CD4-positive, alpha-beta T cell (primary cell): ENCODE measurements at regions of chr11 and their contacts with region 1.

Region 1: DNA sequence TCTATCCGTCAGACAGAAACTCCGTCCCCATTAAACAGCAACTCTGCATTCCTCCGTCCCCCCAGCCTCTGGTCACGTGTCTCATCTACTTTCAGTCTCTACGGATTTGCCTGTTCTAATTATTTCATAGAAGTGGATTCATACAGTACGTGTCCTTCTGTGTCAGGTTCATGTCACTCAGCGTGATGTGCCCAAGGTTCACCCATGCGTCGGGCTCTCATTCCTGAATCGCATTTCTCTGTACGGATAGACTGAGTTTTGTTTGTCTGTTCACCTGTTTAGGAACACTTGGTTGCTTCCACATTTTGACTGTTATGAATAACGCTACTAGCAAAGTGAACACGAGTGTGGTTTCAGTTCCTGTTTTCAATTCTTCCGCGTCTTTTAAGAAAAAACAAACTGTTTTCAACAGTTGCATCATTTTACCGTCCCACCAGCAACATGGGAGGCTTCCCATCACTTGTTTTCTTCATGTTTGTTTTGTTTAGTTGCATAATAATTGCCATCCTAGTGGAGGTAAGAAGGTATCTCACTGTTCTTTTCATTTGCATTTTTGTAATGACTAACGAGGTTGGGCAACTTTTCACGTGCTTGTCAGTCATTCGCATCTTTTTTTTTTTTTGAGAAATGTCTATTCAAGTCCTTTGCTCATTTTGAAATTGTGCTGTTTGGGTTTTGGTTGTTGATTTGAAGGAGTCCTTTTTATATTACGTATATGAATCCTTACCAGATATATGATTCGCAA is 8.9 kb upstream of the NLRP6 start:
- DNase-seq: peak in 12 of 14 experiments; percentile 29 to 89 (median 51)
- ATAC-seq: peak; percentile 76
- H3K4me3 ChIP-seq: peak overlapping the region; percentile 56
- H3K4me3 Mint-ChIP-seq: peak overlapping the region; percentile 91
- H3K27ac ChIP-seq: peak overlapping the region; percentile 74 to 84
- H3K27ac Mint-ChIP-seq: peak overlapping the region; percentile 94
- H3K4me1 ChIP-seq: peaks cover 34% of the 10 kb centered on the region
- H3K4me1 Mint-ChIP-seq: peaks cover 33% of the 10 kb centered on the region
- H3K27me3 ChIP-seq: no peaks in the 10 kb centered on the region
- H3K27me3 Mint-ChIP-seq: no peaks in the 10 kb centered on the region
- CTCF ChIP-seq: no peak

Region 2: GRCh38 chr11:250740-251299 is 18.5 kb before region 1 on chr11:
- CTCF ChIA-PET with region 1: interaction called, 22 read pairs
- POLR2A ChIA-PET with region 1: interaction called, 26 read pairs
- intact Hi-C with region 1: loop called in 1 of 2 experiments (anchors 2 kb)
- DNase-seq: peak; percentile 74 to 89 (median 82)
- ATAC-seq: peak; percentile 100
- H3K4me3 ChIP-seq: no peak overlapping the region
- H3K4me3 Mint-ChIP-seq: peak overlapping the region; percentile 20
- H3K27ac ChIP-seq: no peak overlapping the region
- H3K27ac Mint-ChIP-seq: peak overlapping the region; percentile 76
- H3K4me1 ChIP-seq: peaks cover 6% of the 10 kb centered on the region
- H3K4me1 Mint-ChIP-seq: peaks cover 13% of the 10 kb centered on the region
- H3K27me3 ChIP-seq: no peaks in the 10 kb centered on the region
- H3K27me3 Mint-ChIP-seq: no peaks in the 10 kb centered on the region
- CTCF ChIP-seq: peak; percentile 78

Region 3: GRCh38 chr11:288328-289144 is 19.2 kb after region 1 on chr11 and contains the start of gene PGGHG:
- CTCF ChIA-PET with region 1: interaction called, 3 read pairs
- POLR2A ChIA-PET with region 1: interaction called, 185 read pairs
- intact Hi-C with region 1: loop called (anchors 1 kb)
- DNase-seq: peak in 11 of 14 experiments; percentile 18 to 75 (median 57)
- ATAC-seq: peak; percentile 10
- H3K4me3 ChIP-seq: peak within 1 kb of the TSS; percentile 82
- H3K4me3 Mint-ChIP-seq: peak within 1 kb of the TSS; percentile 91
- H3K27ac ChIP-seq: peak within 1 kb of the TSS; percentile 72 to 98
- H3K27ac Mint-ChIP-seq: peak within 1 kb of the TSS; percentile 93
- H3K4me1 ChIP-seq: peaks cover 42% of the 10 kb centered on the region
- H3K4me1 Mint-ChIP-seq: peaks cover 34% of the 10 kb centered on the region
- H3K27me3 ChIP-seq: peaks cover 0 to 5% of the 10 kb centered on the region in 2 experiments
- H3K27me3 Mint-ChIP-seq: peaks cover 4% of the 10 kb centered on the region
- CTCF ChIP-seq: no peak
- total RNA-seq, gene PGGHG: 670 to 671 TPM

Region 4: GRCh38 chr11:313787-314547 is 44.6 kb after region 1 on chr11 and contains the start of gene IFITM1:
- CTCF ChIA-PET with region 1: no interaction called
- POLR2A ChIA-PET with region 1: interaction called, 26 read pairs
- intact Hi-C with region 1: loop called in 1 of 2 experiments (anchors 2 kb)
- DNase-seq: peak in 13 of 14 experiments; percentile 40 to 89 (median 70)
- ATAC-seq: peak; percentile 62
- H3K4me3 ChIP-seq: peak within 1 kb of the TSS; percentile 90
- H3K4me3 Mint-ChIP-seq: peak within 1 kb of the TSS; percentile 97
- H3K27ac ChIP-seq: peak within 1 kb of the TSS; percentile 82 to 93
- H3K27ac Mint-ChIP-seq: peak within 1 kb of the TSS; percentile 98
- H3K4me1 ChIP-seq: peaks cover 56% of the 10 kb centered on the region
- H3K4me1 Mint-ChIP-seq: peaks cover 50% of the 10 kb centered on the region
- H3K27me3 ChIP-seq: no peaks in the 10 kb centered on the region
- H3K27me3 Mint-ChIP-seq: no peaks in the 10 kb centered on the region
- CTCF ChIP-seq: no peak
- total RNA-seq, gene IFITM1: 286 to 306 TPM

Region 5: DNA sequence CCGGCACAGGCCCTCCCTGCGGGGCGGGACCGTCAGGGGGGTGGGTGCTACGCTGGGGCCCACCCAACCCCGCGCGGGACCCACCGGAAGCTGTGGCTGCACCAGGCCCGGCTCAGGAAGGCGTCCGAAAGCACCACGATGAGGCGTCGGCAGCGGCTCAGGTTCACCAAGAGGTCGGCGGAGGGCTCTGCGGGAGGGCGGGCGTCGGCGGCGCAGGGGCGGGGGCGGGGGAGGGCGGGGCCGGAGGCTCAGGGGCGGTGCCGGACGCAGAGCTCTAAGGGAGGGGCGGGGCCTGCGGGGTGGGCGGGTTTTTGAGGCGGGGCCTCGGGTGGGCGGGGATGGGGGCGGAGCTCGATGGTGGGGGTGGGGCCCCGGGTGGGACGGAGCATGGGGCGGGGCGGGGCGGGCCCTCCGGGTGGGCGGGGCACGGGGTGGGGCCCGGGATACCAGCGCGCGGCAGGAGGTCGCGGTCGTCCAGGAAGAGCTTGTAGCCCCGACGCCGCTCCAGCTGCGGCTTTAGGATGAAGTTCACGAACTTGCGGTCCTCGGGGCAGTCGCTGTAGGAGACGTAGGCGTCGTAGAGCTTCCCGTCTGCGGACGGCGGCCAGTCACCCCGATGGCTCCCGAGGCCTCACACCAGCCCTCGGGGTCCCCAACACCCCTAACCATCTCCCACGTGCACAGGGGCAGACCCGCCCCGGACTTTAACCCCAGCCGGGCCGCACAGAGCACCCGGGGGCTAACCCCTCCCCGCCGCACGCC is 137.8 kb after region 1 on chr11:
- CTCF ChIA-PET with region 1: interaction called, 3 read pairs
- POLR2A ChIA-PET with region 1: interaction called, 13 read pairs
- intact Hi-C with region 1: no loop called
- DNase-seq: peak; percentile 84 to 97 (median 91)
- ATAC-seq: peak; percentile 84
- H3K4me3 ChIP-seq: peak overlapping the region; percentile 39
- H3K4me3 Mint-ChIP-seq: no peak overlapping the region
- H3K27ac ChIP-seq: peak overlapping the region; percentile 64 to 67
- H3K27ac Mint-ChIP-seq: peak overlapping the region; percentile 76
- H3K4me1 ChIP-seq: peaks cover 46% of the 10 kb centered on the region
- H3K4me1 Mint-ChIP-seq: peaks cover 8% of the 10 kb centered on the region
- H3K27me3 ChIP-seq: no peaks in the 10 kb centered on the region
- H3K27me3 Mint-ChIP-seq: no peaks in the 10 kb centered on the region
- CTCF ChIP-seq: no peak

Region 6: GRCh38 chr11:447923-448731 is 178.8 kb after region 1 on chr11:
- CTCF ChIA-PET with region 1: interaction called, 3 read pairs
- POLR2A ChIA-PET with region 1: interaction called, 26 read pairs
- intact Hi-C with region 1: no loop called
- DNase-seq: peak; percentile 91 to 98 (median 94)
- ATAC-seq: peak; percentile 66
- H3K4me3 ChIP-seq: peak overlapping the region; percentile 63
- H3K4me3 Mint-ChIP-seq: peak overlapping the region; percentile 93
- H3K27ac ChIP-seq: peak overlapping the region; percentile 84 to 89
- H3K27ac Mint-ChIP-seq: peak overlapping the region; percentile 95
- H3K4me1 ChIP-seq: peaks cover 38% of the 10 kb centered on the region
- H3K4me1 Mint-ChIP-seq: peaks cover 26% of the 10 kb centered on the region
- H3K27me3 ChIP-seq: no peaks in the 10 kb centered on the region
- H3K27me3 Mint-ChIP-seq: no peaks in the 10 kb centered on the region
- CTCF ChIP-seq: peak; percentile 93

Region 7: DNA sequence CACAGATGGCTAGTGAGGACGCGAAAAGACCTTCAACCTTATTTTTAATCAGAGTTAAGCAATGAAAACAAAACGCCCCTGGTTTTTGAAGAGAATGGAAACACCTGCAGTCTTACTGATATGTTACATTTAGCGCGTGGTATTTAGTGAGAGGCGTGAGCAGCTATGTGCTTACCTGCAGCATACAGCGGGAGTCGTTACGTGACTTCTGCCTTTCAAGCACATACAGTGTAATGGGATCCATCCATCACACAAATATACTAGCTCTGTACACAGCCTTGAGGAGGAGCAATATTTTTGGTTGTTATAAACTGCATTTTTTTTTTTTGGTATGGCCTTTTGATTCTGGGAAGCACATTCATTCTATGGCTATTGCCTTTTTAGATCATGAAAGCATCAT is 1323.3 kb after region 1 on chr11:
- CTCF ChIA-PET with region 1: no interaction called
- POLR2A ChIA-PET with region 1: no interaction called
- intact Hi-C with region 1: no loop called
- DNase-seq: no peak
- ATAC-seq: no peak
- H3K4me3 ChIP-seq: no peak overlapping the region
- H3K4me3 Mint-ChIP-seq: no peak overlapping the region
- H3K27ac ChIP-seq: no peak overlapping the region
- H3K27ac Mint-ChIP-seq: no peak overlapping the region
- H3K4me1 ChIP-seq: peaks cover 34% of the 10 kb centered on the region
- H3K4me1 Mint-ChIP-seq: peaks cover 31% of the 10 kb centered on the region
- H3K27me3 ChIP-seq: peaks cover 0 to 2% of the 10 kb centered on the region in 2 experiments
- H3K27me3 Mint-ChIP-seq: peaks cover 39% of the 10 kb centered on the region
- CTCF ChIP-seq: no peak